Activated CD4-positive, alpha-beta T cell treated with anti-CD3 and anti-CD28 coated beads for 36 hours (primary cell): ENCODE measurements at regions of chr5 and their contacts with region 1.

Region 1: DNA sequence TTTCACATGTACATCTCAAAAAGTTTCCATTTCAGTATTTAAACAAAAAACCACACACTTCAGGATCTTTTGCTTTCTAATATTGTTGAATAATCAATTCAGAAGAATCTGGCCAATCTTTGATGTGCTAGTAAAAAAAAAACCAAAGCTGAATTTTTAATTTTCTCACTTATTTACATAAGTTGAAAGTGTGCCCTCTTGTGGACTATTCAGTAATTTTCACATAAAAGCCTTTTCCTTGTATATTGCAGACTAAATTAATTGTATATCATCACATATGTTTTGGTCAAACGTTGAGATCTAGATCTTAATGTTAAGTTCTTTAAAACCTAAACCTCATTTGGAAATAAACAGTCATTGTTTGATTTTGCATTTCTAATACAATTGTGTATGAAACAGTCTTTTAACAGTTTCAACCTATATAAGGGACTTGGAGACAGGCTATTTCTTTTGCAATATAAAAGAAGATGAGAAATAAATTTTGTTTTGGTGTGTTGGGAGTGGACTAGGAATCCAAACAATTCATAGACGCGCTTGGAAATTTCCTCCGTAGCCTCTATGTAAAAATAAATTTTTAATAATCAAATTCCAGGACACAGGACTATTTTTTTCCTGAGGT is 68.1 kb downstream of the NIPBL start:
- DNase-seq: no peak
- ATAC-seq: no peak
- H3K4me3 Mint-ChIP-seq: no peak overlapping the region
- H3K27ac Mint-ChIP-seq: no peak overlapping the region
- H3K4me1 Mint-ChIP-seq: peaks cover 49% of the 10 kb centered on the region
- H3K27me3 Mint-ChIP-seq: no peaks in the 10 kb centered on the region

Region 2: GRCh38 chr5:36739751-36740221 is 204.9 kb before region 1 on chr5:
- CTCF ChIA-PET with region 1: interaction called, 9 read pairs
- POLR2A ChIA-PET with region 1: no interaction called
- intact Hi-C with region 1: loop called (anchors 2 to 5 kb)
- DNase-seq: peak; percentile 86
- ATAC-seq: peak; percentile 85
- H3K4me3 Mint-ChIP-seq: no peak overlapping the region
- H3K27ac Mint-ChIP-seq: no peak overlapping the region
- H3K4me1 Mint-ChIP-seq: peaks cover 8% of the 10 kb centered on the region
- H3K27me3 Mint-ChIP-seq: peaks cover 31% of the 10 kb centered on the region

Region 3: DNA sequence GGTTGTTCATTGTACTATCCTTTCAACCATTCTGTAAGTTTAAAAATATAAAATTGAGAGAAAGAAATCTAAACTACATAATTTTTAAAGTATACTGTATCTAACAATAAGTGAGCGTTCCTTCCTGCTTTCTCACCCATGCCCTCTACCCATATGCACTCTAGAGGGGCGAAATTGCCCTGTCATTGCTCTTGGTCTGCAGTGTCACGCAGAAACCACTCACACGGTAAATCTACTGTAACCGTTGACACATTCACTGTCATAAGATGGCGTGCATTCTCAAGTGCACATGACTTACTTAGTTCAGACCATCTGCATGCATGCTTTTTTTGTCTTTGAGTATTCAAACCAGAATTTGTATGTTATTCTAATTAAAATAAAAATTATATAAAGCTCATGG is 123.8 kb before region 1 on chr5:
- CTCF ChIA-PET with region 1: no interaction called
- POLR2A ChIA-PET with region 1: no interaction called
- intact Hi-C with region 1: no loop called
- DNase-seq: peak; percentile 9
- ATAC-seq: no peak
- H3K4me3 Mint-ChIP-seq: no peak overlapping the region
- H3K27ac Mint-ChIP-seq: no peak overlapping the region
- H3K4me1 Mint-ChIP-seq: no peaks in the 10 kb centered on the region
- H3K27me3 Mint-ChIP-seq: peaks cover 13% of the 10 kb centered on the region